A673 (cell line): ENCODE measurements at regions of chr18 and their contacts with region 1.

Region 1: DNA sequence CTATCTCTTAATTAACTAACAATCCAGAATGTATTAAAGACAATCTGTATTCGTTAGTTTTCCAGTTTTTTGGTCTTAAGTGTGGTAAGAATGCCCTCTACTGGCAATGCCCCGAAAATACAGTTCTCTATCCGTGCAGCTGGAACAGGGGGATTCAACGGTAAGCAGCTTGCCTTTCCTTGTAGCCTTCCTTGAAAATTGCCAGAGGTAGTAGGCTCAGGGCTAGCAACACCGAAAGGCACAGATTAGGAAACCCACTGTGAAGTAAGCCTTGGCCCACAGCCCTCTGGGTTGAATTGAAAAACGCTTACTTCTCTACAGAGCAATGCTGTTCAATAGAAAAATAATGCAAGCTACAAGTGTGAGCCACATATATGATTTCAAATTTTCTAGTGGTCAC is 17.1 kb upstream of the VPS4B start:
- DNase-seq: peak; percentile 87
- H3K4me3 ChIP-seq: no peak overlapping the region
- H3K27ac ChIP-seq: peak overlapping the region; percentile 71
- H3K4me1 ChIP-seq: peaks cover 19% of the 10 kb centered on the region
- H3K27me3 ChIP-seq: no peaks in the 10 kb centered on the region
- CTCF ChIP-seq: peak; percentile 87

Region 2: GRCh38 chr18:63016270-63016669 is 423.1 kb before region 1 on chr18:
- CTCF ChIA-PET with region 1: interaction called, 13 read pairs
- POLR2A ChIA-PET with region 1: no interaction called
- intact Hi-C with region 1: loop called (anchors 2 kb)
- DNase-seq: peak; percentile 84
- H3K4me3 ChIP-seq: no peak overlapping the region
- H3K27ac ChIP-seq: no peak overlapping the region
- H3K4me1 ChIP-seq: no peaks in the 10 kb centered on the region
- H3K27me3 ChIP-seq: no peaks in the 10 kb centered on the region
- CTCF ChIP-seq: peak; percentile 82

Region 3: DNA sequence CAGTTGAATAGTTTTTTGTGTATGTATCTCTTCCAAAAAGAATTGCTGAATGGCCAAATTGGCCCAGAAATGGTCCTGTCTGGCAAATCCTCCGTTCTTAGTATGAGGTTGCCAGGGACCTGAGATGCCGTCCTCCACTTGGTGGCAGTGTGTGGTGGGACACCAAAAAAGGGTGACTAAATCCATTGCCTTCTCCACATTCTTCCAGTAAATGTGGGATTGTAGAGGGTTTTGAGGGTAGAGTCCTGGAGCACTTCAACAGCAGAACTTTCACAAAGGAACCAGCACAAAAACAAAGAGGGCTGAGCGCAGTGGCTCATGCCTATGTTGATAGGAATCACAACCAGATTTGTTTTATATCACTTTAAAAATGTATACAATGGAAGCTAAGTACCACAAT is 319.7 kb before region 1 on chr18:
- CTCF ChIA-PET with region 1: no interaction called
- POLR2A ChIA-PET with region 1: no interaction called
- intact Hi-C with region 1: loop called (anchors 2 kb)
- DNase-seq: peak; percentile 89
- H3K4me3 ChIP-seq: no peak overlapping the region
- H3K27ac ChIP-seq: peak overlapping the region; percentile 81
- H3K4me1 ChIP-seq: peaks cover 25% of the 10 kb centered on the region
- H3K27me3 ChIP-seq: no peaks in the 10 kb centered on the region
- CTCF ChIP-seq: peak; percentile 79

Region 4: GRCh38 chr18:63339920-63340484 is 99.3 kb before region 1 on chr18:
- CTCF ChIA-PET with region 1: no interaction called
- POLR2A ChIA-PET with region 1: no interaction called
- intact Hi-C with region 1: loop called (anchors 1 kb)
- DNase-seq: peak; percentile 80
- H3K4me3 ChIP-seq: no peak overlapping the region
- H3K27ac ChIP-seq: no peak overlapping the region
- H3K4me1 ChIP-seq: peaks cover 33% of the 10 kb centered on the region
- H3K27me3 ChIP-seq: no peaks in the 10 kb centered on the region
- CTCF ChIP-seq: peak; percentile 77

Region 5: GRCh38 chr18:63969960-63970802 is 530.8 kb after region 1 on chr18 and contains the start of gene SERPINB8:
- CTCF ChIA-PET with region 1: no interaction called
- POLR2A ChIA-PET with region 1: interaction called, 10 read pairs
- intact Hi-C with region 1: no loop called
- DNase-seq: peak; percentile 97
- H3K4me3 ChIP-seq: peak within 1 kb of the TSS; percentile 89
- H3K27ac ChIP-seq: peak within 1 kb of the TSS; percentile 99
- H3K4me1 ChIP-seq: peaks cover 8% of the 10 kb centered on the region
- H3K27me3 ChIP-seq: no peaks in the 10 kb centered on the region
- CTCF ChIP-seq: no peak
- total RNA-seq, gene SERPINB8: 11.3 and 26.4 TPM in 2 replicates